ENCODE measurements at regions of chr13 and their contacts with region 1.

Region 1: GRCh38 chr13:33349986-33350826 is 64.7 kb upstream of the STARD13 start:
- DNase-seq: peak; percentile 37
- ATAC-seq: peak; percentile 62
- H3K4me3 ChIP-seq: peak overlapping the region; percentile 96
- H3K27ac ChIP-seq: peak overlapping the region; percentile 26
- H3K4me1 ChIP-seq: peaks cover 31% of the 10 kb centered on the region
- H3K27me3 ChIP-seq: no peaks in the 10 kb centered on the region
- CTCF ChIP-seq: no peak

Region 2: GRCh38 chr13:33276570-33276969 is 73.6 kb before region 1 on chr13:
- CTCF ChIA-PET with region 1: no interaction called
- POLR2A ChIA-PET with region 1: no interaction called
- intact Hi-C with region 1: no loop called
- DNase-seq: no peak
- ATAC-seq: no peak
- H3K4me3 ChIP-seq: no peak overlapping the region
- H3K27ac ChIP-seq: no peak overlapping the region
- H3K4me1 ChIP-seq: peaks cover 72% of the 10 kb centered on the region
- H3K27me3 ChIP-seq: no peaks in the 10 kb centered on the region
- CTCF ChIP-seq: no peak

Region 3: GRCh38 chr13:33441015-33441414 is 90.8 kb after region 1 on chr13:
- CTCF ChIA-PET with region 1: no interaction called
- POLR2A ChIA-PET with region 1: no interaction called
- intact Hi-C with region 1: loop called (anchors 10 kb)
- DNase-seq: peak; percentile 60
- ATAC-seq: peak; percentile 46; the same call in 1 of the 2 replicates
- H3K4me3 ChIP-seq: no peak overlapping the region
- H3K27ac ChIP-seq: no peak overlapping the region
- H3K4me1 ChIP-seq: peaks cover 20% of the 10 kb centered on the region
- H3K27me3 ChIP-seq: no peaks in the 10 kb centered on the region
- CTCF ChIP-seq: peak; percentile 64

Measured in PC-3 (cell line).